Activated T-helper 2 cell treated with anti-CD3 and anti-CD28 coated beads, Interferon-gamma antibody, Interleukin-2, Interleukin-4, amounts not matched to agents 10 μg/mL and 5 μg/mL and 100 μg/mL, durations not matched to agents 14 hours and 24 hours and 36 hours (primary cell): ENCODE measurements at regions of chr14 and their contacts with region 1.

Region 1: DNA sequence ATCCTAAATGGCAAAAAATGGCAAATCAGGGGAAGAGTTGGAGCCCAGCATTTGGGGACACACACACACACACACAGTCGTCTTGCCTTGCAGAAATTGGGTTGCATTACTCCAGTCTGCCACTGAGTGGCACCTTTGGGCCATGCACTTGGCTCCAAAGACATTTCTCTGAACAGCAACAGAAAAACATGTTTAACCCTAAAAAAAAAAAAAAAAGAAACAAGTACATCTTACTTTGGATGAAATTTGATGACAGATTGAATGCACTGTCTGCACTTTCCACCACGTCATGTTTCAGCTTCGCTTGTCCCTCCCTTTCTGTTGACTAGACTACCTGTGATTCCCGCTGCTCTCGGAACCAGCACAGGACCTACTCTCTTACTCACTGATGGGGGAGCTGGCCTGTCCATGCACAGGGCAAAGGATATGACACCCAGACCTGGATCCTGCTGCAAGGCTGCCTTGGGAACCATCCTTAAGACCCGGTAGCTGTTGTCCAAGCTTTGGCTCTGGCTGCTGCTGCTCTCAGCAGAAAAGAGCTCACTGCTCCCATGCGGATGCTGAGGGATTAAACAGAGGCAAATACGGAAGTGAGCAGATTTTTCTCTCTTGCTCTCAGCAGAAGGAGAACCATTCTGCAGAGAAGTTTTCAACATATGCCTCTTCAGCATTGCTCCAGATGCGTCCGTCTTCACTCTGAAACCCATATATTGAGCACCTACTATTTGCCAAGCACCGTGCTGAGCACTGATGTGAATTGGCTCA is 376.8 kb downstream of the DPF3 start:
- DNase-seq: peak; percentile 69
- H3K4me3 Mint-ChIP-seq: no peak overlapping the region
- H3K27ac Mint-ChIP-seq: no peak overlapping the region
- H3K4me1 Mint-ChIP-seq: peaks cover 59% of the 10 kb centered on the region
- H3K27me3 Mint-ChIP-seq: peaks cover 25% of the 10 kb centered on the region

Region 2: GRCh38 chr14:72120315-72120714 is 396.8 kb before region 1 on chr14:
- intact Hi-C with region 1: no loop called
- DNase-seq: no peak
- H3K4me3 Mint-ChIP-seq: no peak overlapping the region
- H3K27ac Mint-ChIP-seq: no peak overlapping the region
- H3K4me1 Mint-ChIP-seq: peaks cover 4% of the 10 kb centered on the region
- H3K27me3 Mint-ChIP-seq: peaks cover 24% of the 10 kb centered on the region

Region 3: DNA sequence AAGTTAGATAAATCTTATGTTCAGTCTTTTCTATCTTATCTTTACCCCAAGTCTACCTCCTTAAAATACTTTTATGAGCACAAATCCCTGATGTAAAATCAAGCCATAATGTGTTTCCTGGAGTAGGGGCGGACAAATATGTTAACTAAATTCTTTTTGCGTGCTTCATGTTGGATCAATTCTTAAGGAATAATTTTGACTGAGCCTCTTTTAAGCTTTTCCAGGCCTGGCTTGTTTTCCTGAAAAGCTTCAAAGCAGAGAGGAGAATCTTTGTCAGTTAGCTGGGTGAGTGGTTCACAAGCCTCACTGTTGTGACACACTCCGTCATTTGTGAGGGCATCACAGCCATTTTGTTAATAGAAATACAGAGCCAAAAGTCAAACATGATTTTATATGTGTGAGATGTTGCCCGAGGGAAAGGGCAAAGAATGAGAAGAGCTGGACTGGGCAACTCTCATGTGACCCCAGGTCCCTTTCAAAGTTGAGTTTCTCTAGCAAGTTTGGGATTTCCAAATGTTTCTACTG is 116.0 kb before region 1 on chr14:
- intact Hi-C with region 1: no loop called
- DNase-seq: no peak
- H3K4me3 Mint-ChIP-seq: peak overlapping the region; percentile 43
- H3K27ac Mint-ChIP-seq: peak overlapping the region; percentile 30
- H3K4me1 Mint-ChIP-seq: peaks cover 27% of the 10 kb centered on the region
- H3K27me3 Mint-ChIP-seq: peaks cover 34% of the 10 kb centered on the region

Region 4: DNA sequence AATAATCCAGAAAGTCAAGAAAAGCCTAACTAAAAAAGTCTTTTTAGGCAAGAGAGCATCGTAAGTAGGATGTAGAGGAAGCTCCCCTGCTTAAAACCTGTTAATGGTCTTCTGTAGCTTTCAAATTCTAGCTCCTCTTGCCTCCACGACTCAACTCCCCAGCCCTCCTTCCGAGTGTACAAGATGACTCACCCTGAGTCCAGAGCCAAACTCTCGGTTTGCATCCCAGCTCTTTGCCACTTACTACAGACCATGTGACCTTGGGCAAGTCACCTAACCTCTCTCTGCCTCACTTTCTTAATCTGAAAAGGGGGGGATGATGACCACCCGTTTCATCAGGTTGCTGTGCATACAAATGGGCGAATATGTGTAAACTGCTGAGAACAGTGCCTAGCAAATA is 83.6 kb before region 1 on chr14:
- intact Hi-C with region 1: no loop called
- DNase-seq: no peak
- H3K4me3 Mint-ChIP-seq: no peak overlapping the region
- H3K27ac Mint-ChIP-seq: no peak overlapping the region
- H3K4me1 Mint-ChIP-seq: peaks cover 42% of the 10 kb centered on the region
- H3K27me3 Mint-ChIP-seq: peaks cover 2% of the 10 kb centered on the region

Region 5: DNA sequence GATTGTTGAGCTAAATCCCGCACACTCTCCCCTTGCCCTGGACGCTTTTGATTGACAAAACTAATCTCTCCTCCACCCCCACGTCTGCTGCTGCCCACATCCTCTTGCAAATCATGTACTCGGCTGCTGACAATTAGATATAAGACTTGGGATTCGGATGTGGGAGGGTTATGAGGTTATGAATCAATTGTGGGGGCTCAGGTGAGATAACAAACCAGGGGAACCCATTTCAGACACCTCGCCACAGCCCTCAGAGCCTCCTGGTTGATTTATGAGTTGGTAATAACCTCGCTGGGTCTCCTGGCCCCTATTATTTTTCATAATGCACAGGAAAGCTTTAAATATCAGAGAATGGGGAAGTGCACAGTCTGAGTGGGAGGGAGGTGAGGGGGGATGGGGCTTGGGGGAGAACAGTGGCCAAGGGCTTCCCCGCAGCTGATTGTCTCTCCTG is 73.1 kb before region 1 on chr14:
- intact Hi-C with region 1: loop called (anchors 2 kb)
- DNase-seq: peak; percentile 31
- H3K4me3 Mint-ChIP-seq: no peak overlapping the region
- H3K27ac Mint-ChIP-seq: peak overlapping the region; percentile 23
- H3K4me1 Mint-ChIP-seq: peaks cover 62% of the 10 kb centered on the region
- H3K27me3 Mint-ChIP-seq: no peaks in the 10 kb centered on the region

Region 6: DNA sequence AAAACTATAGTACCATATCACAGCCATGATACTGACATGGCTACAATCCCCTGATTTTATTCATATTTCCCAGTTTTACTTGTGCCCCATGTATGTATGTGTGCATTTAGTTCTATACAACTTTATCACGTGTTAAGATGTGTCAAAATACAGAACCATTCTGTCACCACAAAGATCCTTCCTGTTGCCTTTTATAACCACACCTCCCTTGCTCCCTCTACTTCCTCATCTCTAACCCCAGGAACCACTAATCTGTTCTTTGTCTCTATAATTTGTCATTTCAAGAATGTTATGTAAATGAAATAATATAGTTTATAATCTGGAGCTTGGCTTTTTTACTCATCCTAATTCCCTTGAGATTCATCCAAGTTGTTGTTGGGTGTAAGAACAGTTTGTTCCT is 18.4 kb after region 1 on chr14:
- intact Hi-C with region 1: loop called (anchors 2 kb)
- DNase-seq: no peak
- H3K4me3 Mint-ChIP-seq: no peak overlapping the region
- H3K27ac Mint-ChIP-seq: no peak overlapping the region
- H3K4me1 Mint-ChIP-seq: peaks cover 26% of the 10 kb centered on the region
- H3K27me3 Mint-ChIP-seq: peaks cover 48% of the 10 kb centered on the region

Region 7: DNA sequence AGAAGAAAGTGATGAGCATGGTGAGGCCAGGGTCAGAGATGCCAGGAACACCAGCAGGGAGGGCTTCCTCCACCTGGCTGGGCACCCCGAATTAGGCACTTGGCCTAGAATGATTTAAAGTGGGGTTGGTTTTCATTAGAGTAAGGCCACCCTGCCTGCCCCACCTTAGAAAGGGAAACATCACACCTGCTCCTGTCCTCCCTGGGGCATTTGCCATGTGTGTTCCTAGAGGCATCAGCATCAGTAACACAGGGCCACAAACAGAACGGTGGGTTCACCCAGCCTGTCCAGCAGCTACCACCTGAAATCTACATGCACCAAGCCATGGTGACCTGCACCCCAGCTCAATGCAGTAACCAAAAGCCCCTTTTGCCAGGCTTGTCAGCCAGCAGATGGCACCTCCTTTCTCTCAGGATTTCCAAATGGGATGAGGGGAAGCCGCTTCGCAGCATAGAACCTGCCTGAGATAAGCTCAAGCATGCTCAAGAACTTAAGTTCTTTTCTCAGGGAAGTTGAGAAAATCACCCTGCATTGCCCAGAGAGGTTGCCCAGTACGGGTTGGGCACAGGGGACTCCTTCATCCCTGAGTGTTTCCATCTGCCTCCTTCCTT is 38.0 kb after region 1 on chr14:
- intact Hi-C with region 1: no loop called
- DNase-seq: no peak
- H3K4me3 Mint-ChIP-seq: no peak overlapping the region
- H3K27ac Mint-ChIP-seq: no peak overlapping the region
- H3K4me1 Mint-ChIP-seq: no peaks in the 10 kb centered on the region
- H3K27me3 Mint-ChIP-seq: peaks cover 65% of the 10 kb centered on the region

Region 8: DNA sequence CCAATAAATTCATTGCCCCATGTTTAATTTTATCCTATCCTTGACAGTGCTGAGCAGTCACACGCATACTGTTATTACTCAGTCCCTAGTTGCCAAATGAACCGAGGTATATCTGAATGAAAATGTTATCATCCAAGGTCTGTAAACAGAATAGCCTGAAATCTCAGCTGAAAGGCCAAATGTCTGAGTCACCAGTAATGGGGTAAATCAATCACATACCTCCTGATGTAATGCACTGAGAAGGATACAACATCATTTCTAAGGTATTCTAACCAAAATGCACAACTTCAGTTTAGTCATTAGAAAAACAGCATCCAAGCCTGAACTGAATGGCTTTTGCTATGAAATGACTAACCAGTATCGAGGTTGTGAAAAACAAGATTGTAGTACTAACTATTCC is 148.1 kb after region 1 on chr14:
- intact Hi-C with region 1: loop called (anchors 10 kb)
- DNase-seq: no peak
- H3K4me3 Mint-ChIP-seq: no peak overlapping the region
- H3K27ac Mint-ChIP-seq: no peak overlapping the region
- H3K4me1 Mint-ChIP-seq: peaks cover 8% of the 10 kb centered on the region
- H3K27me3 Mint-ChIP-seq: peaks cover 47% of the 10 kb centered on the region

Region 9: GRCh38 chr14:72812292-72812911 is 295.3 kb after region 1 on chr14:
- intact Hi-C with region 1: loop called (anchors 5 kb)
- DNase-seq: no peak
- H3K4me3 Mint-ChIP-seq: no peak overlapping the region
- H3K27ac Mint-ChIP-seq: no peak overlapping the region
- H3K4me1 Mint-ChIP-seq: peaks cover 27% of the 10 kb centered on the region
- H3K27me3 Mint-ChIP-seq: no peaks in the 10 kb centered on the region

Region 10: GRCh38 chr14:72948481-72949138 is 431.5 kb after region 1 on chr14:
- intact Hi-C with region 1: loop called (anchors 1 kb)
- DNase-seq: peak; percentile 44
- H3K4me3 Mint-ChIP-seq: no peak overlapping the region
- H3K27ac Mint-ChIP-seq: no peak overlapping the region
- H3K4me1 Mint-ChIP-seq: peaks cover 2% of the 10 kb centered on the region
- H3K27me3 Mint-ChIP-seq: no peaks in the 10 kb centered on the region